Endothelial cell of umbilical vein (primary cell): ENCODE measurements at regions of chr6 and their contacts with region 1.

Region 1: DNA sequence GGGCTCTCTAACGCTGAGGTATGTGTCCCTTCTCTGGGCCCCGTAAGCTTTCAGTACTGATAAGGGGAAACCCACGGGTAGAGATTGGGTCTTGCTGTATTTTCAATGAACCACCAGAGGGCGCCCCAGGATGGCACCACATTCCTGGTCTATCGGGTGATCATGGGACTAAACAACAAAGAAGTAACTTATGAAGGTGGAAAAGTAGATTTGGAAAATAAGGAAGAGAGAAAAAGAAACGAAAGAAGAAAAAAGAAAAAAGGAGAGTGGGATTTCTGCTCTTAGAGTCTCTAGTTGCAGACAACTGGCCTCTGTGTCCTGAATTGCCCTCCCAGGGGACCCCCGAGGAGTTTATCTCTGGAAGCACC is 93.8 kb downstream of the GMPR start:
- DNase-seq: peak; percentile 89
- H3K4me3 ChIP-seq: no peak overlapping the region
- H3K27ac ChIP-seq: no peak overlapping the region
- H3K4me1 ChIP-seq: peaks cover 24% of the 10 kb centered on the region
- H3K27me3 ChIP-seq: no peaks in the 10 kb centered on the region
- CTCF ChIP-seq: peak; percentile 82
- POLR2A ChIP-seq: no peak

Region 2: GRCh38 chr6:16238057-16238962 is 93.8 kb before region 1 on chr6 and contains the start of gene GMPR:
- CTCF ChIA-PET with region 1: no interaction called
- POLR2A ChIA-PET with region 1: no interaction called
- dilution Hi-C with region 1: no loop called
- intact Hi-C with region 1: loop called (anchors 1 kb)
- DNase-seq: peak; percentile 81
- H3K4me3 ChIP-seq: peak within 1 kb of the TSS; percentile 63 to 97 (median 73)
- H3K27ac ChIP-seq: peak within 1 kb of the TSS; percentile 75
- H3K4me1 ChIP-seq: peaks cover 32% of the 10 kb centered on the region
- H3K27me3 ChIP-seq: no peaks in the 10 kb centered on the region
- CTCF ChIP-seq: no peak
- POLR2A ChIP-seq: no peak
- total RNA-seq, gene GMPR: 36.3 and 43.2 TPM in 2 replicates

Region 3: DNA sequence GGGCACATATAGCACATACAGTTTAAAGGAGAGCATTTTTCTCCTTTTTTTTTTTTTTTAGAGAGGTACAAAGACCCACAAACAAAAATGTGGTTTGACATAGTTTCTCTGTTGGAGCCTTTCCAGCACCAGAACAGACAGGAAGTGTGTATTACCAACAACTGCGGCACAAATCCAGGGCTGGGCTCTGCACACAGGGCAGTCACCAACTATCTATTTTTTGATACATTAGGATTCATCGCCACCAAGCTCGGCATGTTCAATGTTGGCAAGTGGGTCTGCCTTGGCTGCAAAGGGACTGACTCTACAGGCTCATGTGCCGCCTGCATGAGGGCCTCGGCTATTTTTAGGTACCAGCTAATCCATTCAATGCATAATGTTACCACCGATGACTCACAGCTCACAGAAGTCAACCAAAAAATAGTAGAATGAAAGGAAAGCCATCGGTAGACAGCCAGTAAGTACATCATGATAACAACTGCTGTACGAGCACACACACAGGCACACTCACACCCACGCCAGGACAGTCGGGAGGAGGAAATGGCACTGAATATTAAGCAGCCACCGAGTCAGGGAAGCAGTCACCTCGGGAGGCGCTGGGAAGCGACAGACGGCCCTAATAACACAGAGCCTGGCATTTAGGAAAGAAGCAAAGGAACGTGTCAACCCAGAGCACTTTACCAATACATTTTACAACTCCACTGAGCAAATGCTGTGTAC is 12.2 kb before region 1 on chr6:
- CTCF ChIA-PET with region 1: interaction called, 36 read pairs
- POLR2A ChIA-PET with region 1: no interaction called
- dilution Hi-C with region 1: no loop called
- intact Hi-C with region 1: loop called (anchors 1 kb)
- DNase-seq: peak; percentile 95
- H3K4me3 ChIP-seq: peak overlapping the region in 1 of 3 experiments; percentile 43
- H3K27ac ChIP-seq: peak overlapping the region; percentile 87
- H3K4me1 ChIP-seq: peaks cover 15% of the 10 kb centered on the region
- H3K27me3 ChIP-seq: no peaks in the 10 kb centered on the region
- CTCF ChIP-seq: no peak
- POLR2A ChIP-seq: no peak

Region 4: DNA sequence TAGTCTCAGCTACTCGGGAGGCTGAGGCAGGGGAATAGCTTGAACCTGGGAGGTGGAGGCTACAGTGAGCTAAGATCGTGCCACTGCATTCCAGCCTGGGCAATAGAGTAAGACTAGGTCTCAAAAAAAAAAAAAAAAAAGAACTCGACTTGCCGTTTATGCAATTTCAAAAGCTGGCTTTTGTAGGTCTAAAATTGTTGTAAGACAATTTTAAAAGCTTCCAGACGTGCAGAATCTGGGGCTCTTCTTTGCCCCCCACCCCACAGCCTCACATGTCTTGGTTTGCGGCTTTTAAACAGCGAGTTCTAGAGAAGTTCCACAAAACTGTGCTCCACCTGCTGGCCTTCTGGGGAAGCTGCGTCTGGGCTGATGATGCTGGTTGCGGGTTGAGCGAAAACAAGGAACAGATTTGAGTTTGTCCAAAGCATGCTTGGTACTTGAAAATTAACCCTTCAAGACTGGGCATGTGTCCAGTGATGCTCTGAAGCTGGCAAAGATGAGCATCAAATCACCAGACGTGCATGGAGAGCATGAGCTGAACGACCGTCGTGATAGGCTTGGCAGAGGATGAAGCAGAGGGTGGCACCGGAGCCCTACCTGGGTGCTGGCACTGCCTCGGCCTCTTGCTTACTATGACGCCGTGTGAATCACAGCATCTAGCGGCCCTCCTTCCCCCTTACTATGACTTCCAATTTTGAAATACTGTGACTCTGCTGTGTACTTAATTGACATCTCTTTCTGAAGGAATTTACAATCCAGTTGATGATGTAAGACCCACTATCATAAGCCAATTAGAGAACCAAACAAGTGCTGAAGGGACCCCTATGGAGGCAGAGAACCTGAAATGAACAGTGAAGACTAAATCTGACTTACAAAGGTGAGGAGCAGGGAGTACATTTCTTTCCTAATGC is 77.6 kb after region 1 on chr6:
- CTCF ChIA-PET with region 1: interaction called, 92 read pairs
- POLR2A ChIA-PET with region 1: no interaction called
- dilution Hi-C with region 1: no loop called
- intact Hi-C with region 1: loop called (anchors 1 kb)
- DNase-seq: peak; percentile 67
- H3K4me3 ChIP-seq: no peak overlapping the region
- H3K27ac ChIP-seq: no peak overlapping the region
- H3K4me1 ChIP-seq: no peaks in the 10 kb centered on the region
- H3K27me3 ChIP-seq: no peaks in the 10 kb centered on the region
- CTCF ChIP-seq: peak; percentile 87 to 89
- POLR2A ChIP-seq: no peak

Region 5: DNA sequence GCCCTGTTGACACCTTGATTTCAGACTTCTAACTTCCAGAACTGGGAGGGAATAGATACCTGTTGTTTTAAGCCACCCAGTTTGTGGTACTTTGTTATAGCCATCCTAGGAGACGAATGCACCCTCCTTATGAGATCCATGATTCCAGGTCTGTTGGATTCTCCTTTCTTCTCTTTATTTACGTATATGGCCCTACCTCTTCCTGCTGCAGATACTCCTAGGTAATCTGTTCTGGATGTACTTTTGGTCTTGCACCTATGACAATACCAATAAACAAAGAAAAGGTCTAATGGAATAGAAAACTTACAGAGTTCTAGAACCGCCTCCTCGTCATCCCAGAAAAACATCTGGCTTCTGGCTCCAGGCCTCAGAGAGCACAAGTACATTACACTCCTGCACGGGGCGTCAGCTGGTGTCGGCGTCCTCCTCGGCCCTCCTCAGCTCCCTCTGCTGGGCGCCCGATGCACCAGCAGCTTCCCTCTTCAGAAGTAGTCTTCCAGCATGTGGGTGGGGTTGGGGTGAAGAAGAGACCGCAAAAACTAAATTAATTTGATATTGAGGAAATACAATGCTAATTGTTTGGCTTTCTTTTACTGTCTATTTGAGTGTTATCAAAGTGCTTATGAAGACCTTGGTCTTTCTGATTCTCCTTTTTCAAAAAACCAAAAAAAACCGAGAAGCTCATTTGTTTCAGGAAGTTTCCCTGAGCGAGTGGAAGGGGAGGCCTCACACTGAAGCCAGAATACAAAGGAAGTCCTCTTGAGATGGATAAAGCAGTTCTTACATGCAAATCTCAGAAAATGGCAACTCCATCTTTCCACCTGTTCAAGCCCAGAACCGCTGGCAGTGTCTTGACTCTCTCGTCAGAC is 438.8 kb after region 1 on chr6:
- CTCF ChIA-PET with region 1: interaction called, 18 read pairs
- POLR2A ChIA-PET with region 1: no interaction called
- dilution Hi-C with region 1: no loop called
- intact Hi-C with region 1: loop called (anchors 1 kb)
- DNase-seq: peak; percentile 76
- H3K4me3 ChIP-seq: no peak overlapping the region
- H3K27ac ChIP-seq: peak overlapping the region; percentile 84
- H3K4me1 ChIP-seq: peaks cover 39% of the 10 kb centered on the region
- H3K27me3 ChIP-seq: no peaks in the 10 kb centered on the region
- CTCF ChIP-seq: peak; percentile 93 to 94
- POLR2A ChIP-seq: no peak

Region 6: DNA sequence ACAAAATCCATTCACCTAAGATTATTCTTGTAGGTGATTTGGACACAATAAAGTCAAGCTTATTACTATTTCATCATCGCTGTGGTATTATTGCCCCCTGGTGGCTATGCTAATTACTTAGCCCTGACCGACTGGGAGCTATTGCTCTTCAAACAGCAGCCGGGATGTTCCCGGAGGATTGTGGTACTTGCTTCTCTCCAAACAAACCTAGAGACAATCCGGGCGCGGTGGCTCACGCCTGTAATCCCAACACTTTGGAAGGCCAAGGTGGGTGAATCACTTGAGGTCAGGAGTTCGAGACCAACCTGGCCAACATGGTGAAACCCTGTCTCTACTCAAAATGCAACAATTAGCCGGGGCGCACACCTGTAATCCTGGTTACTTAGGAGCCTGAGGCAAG is 754.3 kb after region 1 on chr6:
- CTCF ChIA-PET with region 1: interaction called, 8 read pairs
- POLR2A ChIA-PET with region 1: no interaction called
- dilution Hi-C with region 1: no loop called
- intact Hi-C with region 1: loop called (anchors 5 kb)
- DNase-seq: peak; percentile 76
- H3K4me3 ChIP-seq: no peak overlapping the region
- H3K27ac ChIP-seq: no peak overlapping the region
- H3K4me1 ChIP-seq: no peaks in the 10 kb centered on the region
- H3K27me3 ChIP-seq: peaks cover 7 to 17% of the 10 kb centered on the region in 2 experiments
- CTCF ChIP-seq: peak; percentile 60 to 61
- POLR2A ChIP-seq: no peak

Region 7: GRCh38 chr6:17250237-17250636 is 918.1 kb after region 1 on chr6:
- CTCF ChIA-PET with region 1: no interaction called
- POLR2A ChIA-PET with region 1: no interaction called
- dilution Hi-C with region 1: no loop called
- intact Hi-C with region 1: no loop called
- DNase-seq: no peak
- H3K4me3 ChIP-seq: no peak overlapping the region
- H3K27ac ChIP-seq: no peak overlapping the region
- H3K4me1 ChIP-seq: no peaks in the 10 kb centered on the region
- H3K27me3 ChIP-seq: no peaks in the 10 kb centered on the region
- CTCF ChIP-seq: no peak
- POLR2A ChIP-seq: no peak